Posterior cingulate gyrus (tissue), 11 donors: ENCODE measurements at regions of chr7 and their contacts with region 1.

Region 1: DNA sequence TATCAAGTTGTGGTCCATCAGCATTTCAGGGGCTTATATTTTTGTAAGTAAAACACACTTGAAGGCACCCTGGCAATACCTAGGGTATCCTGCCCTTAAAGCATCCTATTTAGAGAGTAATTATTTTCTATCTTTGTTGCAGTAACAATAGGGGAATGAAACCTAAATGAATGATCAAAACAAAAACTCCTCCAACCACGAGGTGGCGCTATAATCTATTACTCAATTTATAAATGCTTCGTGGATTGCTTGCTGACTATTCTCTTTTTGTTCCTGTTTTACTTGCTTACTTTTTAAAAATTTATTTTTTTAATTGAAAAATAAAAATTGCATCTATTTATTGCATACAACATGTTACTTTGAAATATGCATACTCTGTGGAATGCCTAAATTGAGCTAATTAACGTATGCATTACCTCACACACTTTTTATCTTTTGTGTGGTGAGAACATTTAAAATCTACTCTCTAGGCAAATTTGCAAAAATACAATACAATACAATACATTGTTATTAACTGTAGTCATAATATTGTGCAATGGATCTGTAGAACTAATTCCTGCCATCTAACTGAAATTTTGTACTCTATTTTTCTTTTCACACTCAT is 147.7 kb upstream of the BMPER start:
- DNase-seq: peak in 1 of 10 donors; percentile 45

Region 2: DNA sequence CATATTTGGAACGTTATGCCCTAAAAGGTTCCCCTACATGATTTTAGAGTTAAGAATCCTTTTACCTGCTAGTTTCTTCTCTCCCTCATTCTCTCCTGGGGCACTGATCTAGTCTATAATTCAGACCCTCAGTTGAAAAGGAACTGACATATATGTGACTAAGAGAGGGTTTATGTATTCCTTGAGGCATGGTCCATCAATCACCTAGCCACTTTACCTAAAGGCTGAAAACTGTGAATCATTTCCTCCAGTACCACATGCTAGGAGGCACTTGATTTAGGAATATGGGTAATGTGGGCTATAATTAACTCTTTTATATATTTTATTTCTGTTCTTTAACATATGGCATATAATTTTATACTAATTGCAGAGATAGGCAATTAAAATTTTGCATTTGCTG is 324.8 kb before region 1 on chr7:
- intact Hi-C with region 1: no loop called
- DNase-seq: no peak

Region 3: DNA sequence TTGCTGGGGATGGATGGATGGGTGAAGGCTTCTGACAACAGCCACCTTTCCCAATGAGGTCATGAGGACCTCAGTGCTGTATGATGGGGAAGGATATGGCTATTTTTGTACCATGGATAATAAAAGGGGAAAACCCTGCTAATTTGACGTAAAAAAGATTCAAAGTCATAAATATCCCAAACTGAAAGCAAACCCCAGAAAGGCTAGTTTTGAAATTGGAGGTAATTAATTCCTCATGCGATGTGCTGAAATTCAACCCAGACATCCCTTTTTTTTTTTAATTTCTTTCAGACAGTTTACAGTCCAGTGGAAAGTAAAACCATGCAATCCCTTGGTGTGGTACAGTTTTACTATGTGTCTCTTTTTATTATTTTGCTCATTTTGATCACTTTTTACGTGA is 106.8 kb before region 1 on chr7:
- intact Hi-C with region 1: no loop called
- DNase-seq: no peak

Region 4: DNA sequence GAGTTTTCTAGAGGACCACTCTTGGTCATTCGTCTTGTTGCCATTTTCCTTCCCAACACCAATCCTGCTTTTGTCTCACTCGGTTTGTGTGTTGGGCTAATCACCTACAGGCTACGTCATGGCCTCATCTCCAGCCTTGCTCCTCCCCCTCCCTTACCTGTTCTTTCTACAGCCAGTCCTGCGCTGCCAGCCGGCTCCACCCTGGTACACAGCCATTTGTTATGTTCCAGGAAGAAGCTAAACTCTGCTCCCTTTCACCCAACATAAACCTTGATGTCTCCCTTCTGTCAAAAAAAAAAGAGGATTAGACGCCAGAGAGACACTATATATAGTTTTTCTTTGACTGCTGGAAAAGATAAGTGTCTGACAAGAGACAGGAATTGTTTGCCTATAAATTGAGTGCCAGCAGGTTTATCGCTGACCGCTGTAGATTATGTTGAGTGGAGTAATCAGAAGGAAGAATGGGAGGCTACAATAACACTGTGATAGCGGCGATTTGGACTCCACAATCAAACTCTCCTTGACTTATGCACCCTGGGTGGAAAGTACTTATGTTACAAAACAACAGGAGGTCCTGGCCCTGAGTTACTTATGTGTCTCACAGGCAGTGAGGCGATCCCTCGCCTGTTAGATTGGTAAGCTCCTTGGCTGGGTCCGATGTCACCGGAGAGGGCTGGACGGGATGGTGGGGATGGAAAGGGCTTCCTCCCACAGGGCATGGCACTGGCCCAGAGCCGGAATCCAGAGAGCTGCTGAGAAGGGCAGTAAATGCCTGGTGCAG is 23.6 kb before region 1 on chr7:
- intact Hi-C with region 1: no loop called
- DNase-seq: no peak

Region 5: GRCh38 chr7:33895025-33895804 is 137.6 kb after region 1 on chr7:
- intact Hi-C with region 1: loop called (anchors 1 kb)
- DNase-seq: peak; percentile 76 to 98 (median 92)

Region 6: GRCh38 chr7:33982425-33982786 is 224.7 kb after region 1 on chr7:
- intact Hi-C with region 1: no loop called
- DNase-seq: no peak